ENCODE measurements at regions of chr4 and their contacts with region 1.

Region 1: GRCh38 chr4:173168396-173169177 is at the start of gene GALNT7:
- DNase-seq: peak; percentile 64 to 82 (median 69)
- ATAC-seq: peak; percentile 49 to 82 (median 80)
- H3K4me3 ChIP-seq: peak within 1 kb of the TSS; percentile 41 to 97 (median 88)
- H3K27ac ChIP-seq: peak within 1 kb of the TSS; percentile 67 to 96 (median 90)
- H3K4me1 ChIP-seq: peaks cover 0 to 36% (median 12%) of the 10 kb centered on the region in 12 donors
- H3K27me3 ChIP-seq: no peaks in the 10 kb centered on the region
- CTCF ChIP-seq: no peak
- POLR2A ChIP-seq: no peak
- total RNA-seq, gene GALNT7: 3.1 to 12.8 (median 6.6) TPM

Region 2: DNA sequence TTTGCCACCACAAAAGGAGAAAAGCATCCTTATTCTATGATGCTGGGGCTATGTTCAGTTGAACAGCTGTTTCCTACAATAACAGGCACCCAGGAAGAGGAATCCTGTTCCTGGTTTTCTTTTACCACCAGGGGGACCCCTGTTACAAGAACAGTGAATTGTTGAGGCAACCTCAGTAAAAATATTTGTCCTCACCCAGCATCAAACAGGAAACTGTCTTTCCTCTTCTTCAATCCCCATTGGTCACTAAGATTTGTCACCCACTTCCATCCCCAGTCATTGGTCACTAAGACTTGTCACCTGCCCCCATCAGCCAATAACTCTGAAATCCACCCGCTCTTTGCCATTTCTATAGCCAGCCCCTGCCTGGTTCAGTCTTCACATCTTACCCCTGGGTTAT is 143.5 kb before region 1 on chr4:
- intact Hi-C with region 1: loop called in 7 of 10 experiments (anchors 5 to 10 kb)
- DNase-seq: peak in 2 of 5 donors; percentile 28 to 57
- ATAC-seq: peak in 3 of 4 donors; percentile 26 to 82 (median 74)
- H3K4me3 ChIP-seq: no peak overlapping the region
- H3K27ac ChIP-seq: no peak overlapping the region
- H3K4me1 ChIP-seq: peaks cover 0 to 4% (median 0%) of the 10 kb centered on the region in 12 donors
- H3K27me3 ChIP-seq: no peaks in the 10 kb centered on the region
- CTCF ChIP-seq: peak; percentile 52 to 77 (median 66)
- POLR2A ChIP-seq: no peak

Region 3: GRCh38 chr4:173039617-173040577 is 128.7 kb before region 1 on chr4:
- intact Hi-C with region 1: loop called in 1 of 10 experiments (anchors 10 kb)
- DNase-seq: peak in 2 of 5 donors; percentile 21 to 27
- ATAC-seq: peak; percentile 48 to 83 (median 78)
- H3K4me3 ChIP-seq: peak overlapping the region in 2 of 12 donors; percentile 8 to 30
- H3K27ac ChIP-seq: peak overlapping the region in 9 of 12 donors; percentile 9 to 60 (median 22)
- H3K4me1 ChIP-seq: peaks cover 0 to 28% (median 0%) of the 10 kb centered on the region in 12 donors
- H3K27me3 ChIP-seq: no peaks in the 10 kb centered on the region
- CTCF ChIP-seq: no peak
- POLR2A ChIP-seq: no peak

Region 4: DNA sequence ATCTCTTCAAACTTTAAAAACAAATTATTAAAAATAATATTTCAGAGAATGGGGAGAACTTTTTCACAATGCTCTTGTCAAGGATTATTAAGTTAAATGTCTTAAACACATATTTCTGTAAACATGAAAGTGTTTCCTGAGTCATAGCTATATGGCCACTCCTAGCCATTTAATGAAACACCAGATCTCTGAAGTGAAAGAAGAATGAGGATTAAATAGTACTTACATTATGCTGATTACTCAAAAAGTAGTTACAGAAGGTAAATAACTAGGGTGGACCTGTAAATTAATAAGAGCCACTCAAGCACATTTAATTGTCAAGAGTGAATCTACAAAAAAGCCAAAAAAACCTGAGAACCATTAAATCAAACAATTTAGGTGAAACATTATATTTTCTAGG is 57.6 kb before region 1 on chr4:
- intact Hi-C with region 1: loop called in 1 of 10 experiments (anchors 2 kb)
- DNase-seq: no peak
- ATAC-seq: no peak
- H3K4me3 ChIP-seq: no peak overlapping the region
- H3K27ac ChIP-seq: no peak overlapping the region
- H3K4me1 ChIP-seq: no peaks in the 10 kb centered on the region
- H3K27me3 ChIP-seq: no peaks in the 10 kb centered on the region
- CTCF ChIP-seq: no peak
- POLR2A ChIP-seq: no peak

Region 5: DNA sequence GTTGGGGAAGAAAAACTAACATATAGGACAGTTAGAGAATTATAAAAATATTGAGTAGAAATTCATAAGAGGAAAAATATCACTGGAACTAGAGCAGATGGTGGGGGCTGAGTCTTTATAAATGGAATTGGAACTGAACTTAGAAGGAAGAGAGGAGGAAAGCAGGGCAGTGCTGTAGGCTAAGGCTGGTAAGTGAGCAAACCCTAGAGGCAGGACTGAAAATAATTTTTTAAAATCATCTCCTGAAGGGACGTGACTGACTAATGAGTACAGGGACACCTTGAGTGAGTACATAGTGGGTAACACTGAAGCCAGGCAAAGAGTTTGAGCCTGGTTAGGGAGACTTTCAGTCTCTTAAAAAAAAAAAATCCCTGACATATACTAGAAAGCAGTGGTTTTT is 63.3 kb after region 1 on chr4:
- intact Hi-C with region 1: loop called in 1 of 10 experiments (anchors 10 kb)
- DNase-seq: no peak
- ATAC-seq: peak in 3 of 4 donors; percentile 65 to 69 (median 69)
- H3K4me3 ChIP-seq: no peak overlapping the region
- H3K27ac ChIP-seq: no peak overlapping the region
- H3K4me1 ChIP-seq: peaks cover 0 to 20% (median 4%) of the 10 kb centered on the region in 12 donors
- H3K27me3 ChIP-seq: no peaks in the 10 kb centered on the region
- CTCF ChIP-seq: peak in 5 of 12 donors; percentile 12 to 40 (median 34)
- POLR2A ChIP-seq: no peak

Region 6: GRCh38 chr4:173257732-173258717 is 89.4 kb after region 1 on chr4:
- intact Hi-C with region 1: loop called in 3 of 10 experiments (anchors 5 to 10 kb)
- DNase-seq: peak; percentile 52 to 65 (median 57)
- ATAC-seq: peak; percentile 86 to 98 (median 90)
- H3K4me3 ChIP-seq: no peak overlapping the region
- H3K27ac ChIP-seq: no peak overlapping the region
- H3K4me1 ChIP-seq: peaks cover 0 to 3% (median 0%) of the 10 kb centered on the region in 12 donors
- H3K27me3 ChIP-seq: no peaks in the 10 kb centered on the region
- CTCF ChIP-seq: peak; percentile 56 to 90 (median 82)
- POLR2A ChIP-seq: no peak

Measured in heart left ventricle (tissue), 16 donors.